ENCODE measurements at regions of chr1 and their contacts with region 1.

Region 1: DNA sequence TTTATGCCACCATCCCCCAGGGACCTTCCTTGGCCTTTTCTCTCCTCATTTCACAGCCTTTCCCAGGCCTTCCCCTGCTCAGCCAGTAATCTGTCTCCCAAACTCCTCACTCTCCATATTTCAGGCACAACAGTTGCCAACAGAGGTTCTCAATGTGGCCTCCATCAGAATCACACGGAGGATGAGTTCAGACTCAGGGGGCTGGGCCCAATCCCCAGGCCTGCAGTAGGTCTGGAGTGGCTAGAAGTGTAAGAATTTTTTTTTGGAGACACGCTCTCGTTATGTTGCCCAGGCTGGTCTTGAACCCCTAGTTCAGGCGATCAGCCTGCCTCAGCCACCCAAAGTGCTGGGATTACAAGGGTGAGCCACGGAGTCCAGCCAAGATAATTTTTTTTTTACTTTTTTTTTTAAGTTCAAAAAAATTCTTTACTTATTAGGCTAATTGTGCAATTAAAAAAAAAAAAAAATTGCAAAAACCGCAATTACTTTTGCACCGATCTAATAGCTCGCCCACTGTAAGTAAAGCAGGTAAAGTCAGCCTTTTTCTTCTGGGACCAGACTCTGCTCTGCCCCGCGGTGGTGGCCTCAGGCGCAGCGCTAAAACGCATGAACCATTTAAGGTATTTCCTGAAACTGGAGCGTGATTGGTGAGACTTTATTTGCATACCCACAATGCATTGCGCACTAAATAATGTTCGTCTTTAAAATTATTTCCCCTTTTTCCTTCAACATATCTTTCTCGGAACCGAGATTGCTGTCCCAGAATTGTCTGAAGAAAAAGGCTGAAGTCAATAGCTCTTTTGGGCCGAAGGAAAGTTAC is 18.7 kb downstream of the KIAA2013 start:
- DNase-seq: peak; percentile 90 to 91
- ATAC-seq: peak; percentile 79 to 92 (median 86)
- H3K4me3 ChIP-seq: peak overlapping the region in 7 of 10 donors; percentile 49 to 82 (median 65)
- H3K27ac ChIP-seq: peak overlapping the region; percentile 84 to 100 (median 96)
- H3K4me1 ChIP-seq: peaks cover 0 to 22% (median 5%) of the 10 kb centered on the region in 9 donors
- H3K27me3 ChIP-seq: no peaks in the 10 kb centered on the region
- CTCF ChIP-seq: peak; percentile 35 to 98 (median 76)

Region 2: GRCh38 chr1:11934302-11935056 is 27.0 kb after region 1 on chr1 and contains the start of gene PLOD1:
- intact Hi-C with region 1: loop called in 1 of 10 experiments (anchors 2 kb)
- DNase-seq: peak; percentile 92 to 94
- ATAC-seq: peak; percentile 88 to 95 (median 90)
- H3K4me3 ChIP-seq: peak within 1 kb of the TSS; percentile 47 to 87 (median 69)
- H3K27ac ChIP-seq: peak within 1 kb of the TSS; percentile 59 to 94 (median 90)
- H3K4me1 ChIP-seq: peaks cover 21 to 82% (median 75%) of the 10 kb centered on the region in 9 donors
- H3K27me3 ChIP-seq: no peaks in the 10 kb centered on the region
- CTCF ChIP-seq: no peak
- total RNA-seq, gene PLOD1: 27.3 to 95.3 (median 44.4) TPM

Measured in heart right ventricle (tissue), 16 donors.